GM12878 (cell line): ENCODE measurements at regions of chr3 and their contacts with region 1.

Region 1: GRCh38 chr3:34983631-34984030 is 655.7 kb upstream of the ARPP21 start:
- DNase-seq: no peak
- ATAC-seq: no peak
- H3K4me3 ChIP-seq: no peak overlapping the region
- H3K27ac ChIP-seq: no peak overlapping the region
- H3K4me1 ChIP-seq: no peaks in the 10 kb centered on the region
- H3K27me3 ChIP-seq: no peaks in the 10 kb centered on the region
- CTCF ChIP-seq: no peak
- EP300 ChIP-seq: no peak
- POLR2A ChIP-seq: no peak
- RAD21 ChIP-seq: no peak

Region 2: DNA sequence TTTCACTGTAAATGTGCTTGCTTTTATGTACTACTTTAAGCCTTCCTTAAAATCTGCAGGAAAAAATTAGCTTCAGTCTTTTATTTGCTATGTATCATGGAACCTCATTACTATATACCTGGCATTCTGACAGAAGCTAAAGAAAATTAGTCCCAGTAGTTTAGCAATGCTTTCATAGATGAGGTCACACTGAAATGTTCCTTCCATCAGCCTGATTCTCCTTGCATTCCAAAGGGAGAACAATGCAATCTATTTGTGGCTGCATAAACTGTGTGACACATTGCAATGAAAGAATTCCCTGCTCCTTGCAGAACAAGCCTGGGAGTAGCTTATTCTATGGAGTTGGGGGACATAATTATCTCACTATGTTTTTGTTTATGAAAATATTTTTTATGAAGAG is 35.8 kb before region 1 on chr3:
- CTCF ChIA-PET with region 1: no interaction called
- POLR2A ChIA-PET with region 1: no interaction called
- RAD21 ChIA-PET with region 1: no interaction called
- SMC1A ChIA-PET with region 1: no interaction called
- in situ Hi-C with region 1: no loop called
- intact Hi-C with region 1: no loop called
- DNase-seq: no peak
- ATAC-seq: no peak
- H3K4me3 ChIP-seq: no peak overlapping the region
- H3K27ac ChIP-seq: no peak overlapping the region
- H3K4me1 ChIP-seq: no peaks in the 10 kb centered on the region
- H3K27me3 ChIP-seq: no peaks in the 10 kb centered on the region
- CTCF ChIP-seq: no peak
- EP300 ChIP-seq: no peak
- POLR2A ChIP-seq: no peak
- RAD21 ChIP-seq: no peak

Region 3: DNA sequence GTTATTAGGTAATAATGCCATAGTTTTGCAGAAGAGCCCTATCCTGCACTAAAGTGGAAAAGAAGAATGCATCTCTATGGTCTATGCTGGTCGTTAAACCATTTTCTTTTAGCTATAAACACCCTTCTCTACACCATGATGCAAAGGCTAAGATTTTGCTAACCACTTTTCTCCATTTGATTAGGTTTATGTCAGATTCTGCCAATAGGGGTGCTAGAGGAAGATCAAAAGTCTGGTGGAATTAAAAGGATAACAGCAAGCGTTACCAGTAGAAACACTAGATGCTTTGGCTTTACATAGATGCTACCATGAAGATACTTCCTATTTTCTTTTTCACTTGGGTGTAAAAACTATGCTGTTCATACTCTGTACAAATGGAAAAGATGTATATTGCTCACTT is 14.1 kb before region 1 on chr3:
- CTCF ChIA-PET with region 1: interaction called, 3 read pairs
- POLR2A ChIA-PET with region 1: interaction called, 10 read pairs
- RAD21 ChIA-PET with region 1: no interaction called
- SMC1A ChIA-PET with region 1: interaction called, 3 read pairs
- in situ Hi-C with region 1: no loop called
- intact Hi-C with region 1: no loop called
- DNase-seq: no peak
- ATAC-seq: no peak
- H3K4me3 ChIP-seq: no peak overlapping the region
- H3K27ac ChIP-seq: no peak overlapping the region
- H3K4me1 ChIP-seq: no peaks in the 10 kb centered on the region
- H3K27me3 ChIP-seq: no peaks in the 10 kb centered on the region
- CTCF ChIP-seq: no peak
- EP300 ChIP-seq: no peak
- POLR2A ChIP-seq: no peak
- RAD21 ChIP-seq: no peak